ENCODE measurements at regions of chr22 and their contacts with region 1.

Region 1: DNA sequence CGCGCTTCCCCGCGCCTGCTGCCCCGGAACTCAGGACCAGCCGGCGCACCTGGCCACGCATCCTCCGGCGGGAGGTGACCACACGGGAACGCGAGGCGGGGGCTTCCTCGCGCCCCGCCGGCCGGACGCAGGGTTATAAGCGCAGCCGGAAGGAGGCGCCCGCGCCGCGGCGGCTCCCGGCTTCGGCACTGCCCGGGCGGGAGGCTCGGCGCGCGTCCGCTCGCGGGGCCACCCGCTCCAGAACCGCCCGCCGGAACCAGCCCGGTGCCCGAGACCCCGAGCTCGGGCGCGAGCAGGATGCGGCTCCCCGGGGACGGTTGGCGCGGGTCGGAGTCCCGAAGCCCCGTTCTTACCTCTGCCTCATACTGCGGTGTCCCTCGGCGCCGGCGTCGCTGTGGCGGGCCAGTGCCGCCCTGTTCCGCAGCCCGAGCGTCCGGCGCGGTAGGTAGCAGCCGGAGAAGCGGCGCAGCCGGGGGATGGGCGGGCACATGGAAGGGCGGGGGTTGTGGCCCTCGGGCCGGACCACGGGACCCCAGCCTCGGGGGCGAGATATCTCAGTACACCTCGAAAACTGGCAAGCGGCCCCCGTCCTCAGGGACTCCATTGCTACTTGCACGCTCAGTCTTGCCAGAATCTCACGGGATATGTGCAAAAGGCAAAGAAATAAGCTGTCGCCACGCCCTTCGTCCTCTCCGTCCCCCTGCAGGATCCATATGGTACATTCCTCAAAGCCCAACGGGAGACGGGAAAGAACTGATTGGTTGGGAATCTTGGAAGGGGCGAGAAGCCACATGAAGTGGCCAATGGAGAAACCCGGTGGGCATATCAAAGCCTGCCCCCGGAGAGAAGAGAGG is 23.1 kb downstream of the MICAL3 start:
- DNase-seq: peak; percentile 80 to 88
- H3K4me3 ChIP-seq: peak overlapping the region; percentile 68
- H3K27ac ChIP-seq: peak overlapping the region; percentile 75
- H3K4me1 ChIP-seq: peaks cover 16% of the 10 kb centered on the region
- H3K27me3 ChIP-seq: no peaks in the 10 kb centered on the region
- CTCF ChIP-seq: peak; percentile 42

Region 2: GRCh38 chr22:17846326-17846992 is 154.8 kb before region 1 on chr22:
- CTCF ChIA-PET with region 1: no interaction called
- POLR2A ChIA-PET with region 1: no interaction called
- intact Hi-C with region 1: loop called (anchors 5 kb)
- DNase-seq: no peak
- H3K4me3 ChIP-seq: no peak overlapping the region
- H3K27ac ChIP-seq: peak overlapping the region; percentile 69
- H3K4me1 ChIP-seq: peaks cover 17% of the 10 kb centered on the region
- H3K27me3 ChIP-seq: no peaks in the 10 kb centered on the region
- CTCF ChIP-seq: no peak

Region 3: GRCh38 chr22:18031695-18032454 is 30.6 kb after region 1 on chr22:
- CTCF ChIA-PET with region 1: no interaction called
- POLR2A ChIA-PET with region 1: no interaction called
- intact Hi-C with region 1: loop called (anchors 2 kb)
- DNase-seq: peak; percentile 80 to 90
- H3K4me3 ChIP-seq: peak overlapping the region; percentile 24; the same call in 1 of the 2 replicates
- H3K27ac ChIP-seq: peak overlapping the region; percentile 91
- H3K4me1 ChIP-seq: peaks cover 48% of the 10 kb centered on the region
- H3K27me3 ChIP-seq: no peaks in the 10 kb centered on the region
- CTCF ChIP-seq: no peak

Region 4: DNA sequence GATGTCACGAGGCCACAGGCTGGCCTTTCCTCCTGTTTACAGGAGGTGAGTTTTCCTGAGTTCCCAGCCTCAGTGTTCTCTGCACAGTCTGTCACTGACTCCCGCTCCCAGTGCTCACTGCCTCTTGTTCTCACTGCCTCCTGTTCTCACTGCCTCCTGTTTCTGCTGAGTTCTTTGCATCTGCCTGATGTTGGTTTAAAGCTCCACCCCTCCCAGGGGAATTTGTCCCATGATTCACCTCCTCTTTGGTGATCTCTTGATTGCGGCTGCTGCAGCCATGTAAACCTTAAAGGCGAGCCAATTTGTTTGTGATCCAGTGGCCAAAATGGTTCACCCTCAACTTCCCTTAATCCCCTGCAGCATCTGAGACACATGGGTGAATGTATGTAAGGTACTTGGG is 103.3 kb after region 1 on chr22:
- CTCF ChIA-PET with region 1: no interaction called
- POLR2A ChIA-PET with region 1: no interaction called
- intact Hi-C with region 1: no loop called
- DNase-seq: no peak
- H3K4me3 ChIP-seq: no peak overlapping the region
- H3K27ac ChIP-seq: no peak overlapping the region
- H3K4me1 ChIP-seq: no peaks in the 10 kb centered on the region
- H3K27me3 ChIP-seq: no peaks in the 10 kb centered on the region
- CTCF ChIP-seq: no peak